Activated CD4-positive, alpha-beta T cell treated with anti-CD3 and anti-CD28 coated beads for 36 hours (primary cell): ENCODE measurements at regions of chr6 and their contacts with region 1.

Region 1: GRCh38 chr6:83215131-83216047 is 22.2 kb downstream of the RWDD2A start:
- DNase-seq: peak; percentile 72
- ATAC-seq: peak; percentile 99
- H3K4me3 Mint-ChIP-seq: no peak overlapping the region
- H3K27ac Mint-ChIP-seq: no peak overlapping the region
- H3K4me1 Mint-ChIP-seq: peaks cover 2% of the 10 kb centered on the region
- H3K27me3 Mint-ChIP-seq: peaks cover 10% of the 10 kb centered on the region

Region 2: GRCh38 chr6:82247634-82248232 is 967.7 kb before region 1 on chr6 and contains the start of gene IBTK:
- CTCF ChIA-PET with region 1: no interaction called
- POLR2A ChIA-PET with region 1: no interaction called
- intact Hi-C with region 1: loop called in 1 of 2 experiments (anchors 2 kb)
- DNase-seq: peak; percentile 92
- ATAC-seq: peak; percentile 87
- H3K4me3 Mint-ChIP-seq: peak within 1 kb of the TSS; percentile 97
- H3K27ac Mint-ChIP-seq: peak within 1 kb of the TSS; percentile 93
- H3K4me1 Mint-ChIP-seq: peaks cover 34% of the 10 kb centered on the region
- H3K27me3 Mint-ChIP-seq: no peaks in the 10 kb centered on the region
- total RNA-seq, gene IBTK: 28.6 to 29.5 TPM

Region 3: DNA sequence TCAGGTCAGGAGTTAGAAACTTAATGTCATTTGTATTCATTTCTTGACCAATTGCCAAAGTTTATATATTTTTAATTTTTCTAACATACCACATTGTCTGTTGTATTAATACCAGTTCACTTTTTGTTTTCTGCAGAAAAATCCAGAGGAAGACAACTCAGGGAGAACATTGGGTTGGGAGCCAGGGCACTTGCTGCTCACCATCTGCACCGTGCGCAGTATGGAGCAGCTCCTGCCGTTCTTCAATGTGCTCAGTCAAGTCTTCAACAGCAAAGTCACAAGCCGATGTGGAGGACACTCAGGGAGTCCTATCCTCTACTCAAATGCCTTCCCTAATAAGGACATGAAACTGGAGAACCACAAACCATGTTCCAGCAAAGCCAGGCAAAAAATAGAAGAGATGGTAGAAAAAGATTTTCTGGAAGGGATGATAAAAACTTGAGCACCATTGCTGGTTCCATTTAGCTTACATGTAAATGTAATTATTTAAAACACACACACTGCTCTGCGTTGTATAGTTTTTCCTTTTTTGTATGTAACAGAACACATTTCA is 47.6 kb before region 1 on chr6:
- CTCF ChIA-PET with region 1: no interaction called
- POLR2A ChIA-PET with region 1: no interaction called
- intact Hi-C with region 1: no loop called
- DNase-seq: no peak
- ATAC-seq: no peak
- H3K4me3 Mint-ChIP-seq: no peak overlapping the region
- H3K27ac Mint-ChIP-seq: no peak overlapping the region
- H3K4me1 Mint-ChIP-seq: no peaks in the 10 kb centered on the region
- H3K27me3 Mint-ChIP-seq: no peaks in the 10 kb centered on the region

Region 4: GRCh38 chr6:83514866-83515466 is 299.6 kb after region 1 on chr6:
- CTCF ChIA-PET with region 1: interaction called, 33 read pairs
- POLR2A ChIA-PET with region 1: no interaction called
- intact Hi-C with region 1: no loop called
- DNase-seq: peak; percentile 23
- ATAC-seq: no peak
- H3K4me3 Mint-ChIP-seq: no peak overlapping the region
- H3K27ac Mint-ChIP-seq: no peak overlapping the region
- H3K4me1 Mint-ChIP-seq: peaks cover 4% of the 10 kb centered on the region
- H3K27me3 Mint-ChIP-seq: peaks cover 30% of the 10 kb centered on the region